ENCODE measurements at regions of chr5 and their contacts with region 1.

Region 1: DNA sequence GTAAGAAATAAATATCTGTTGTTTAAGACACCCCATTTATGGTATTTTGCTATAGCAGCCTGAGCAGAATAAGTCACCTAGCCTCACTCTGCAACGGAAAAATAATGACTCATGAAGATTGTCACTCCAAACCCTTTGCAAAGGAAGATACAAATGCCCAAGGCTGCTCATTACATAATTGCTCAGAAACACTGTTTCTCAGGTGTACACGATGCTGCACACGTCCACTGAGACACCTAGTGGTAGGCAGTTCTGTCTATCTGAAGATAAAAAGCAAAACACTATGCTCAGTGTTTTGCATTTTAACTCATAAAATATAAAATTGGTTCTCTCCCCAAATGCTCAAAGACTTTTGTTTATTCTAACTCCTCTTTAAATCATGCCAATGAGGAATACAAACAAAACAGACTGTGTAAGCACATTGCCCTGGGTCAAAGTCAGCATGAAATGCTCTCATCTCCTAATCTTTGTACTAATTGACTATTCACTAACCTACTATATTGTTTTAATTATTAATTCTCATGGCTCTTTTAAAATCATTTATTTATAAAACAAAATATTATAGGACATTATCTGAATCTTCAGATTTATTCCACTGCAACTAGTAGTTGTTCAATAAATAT is 7.7 kb upstream of the TSLP start:
- DNase-seq: no peak
- H3K4me3 Mint-ChIP-seq: no peak overlapping the region
- H3K27ac Mint-ChIP-seq: no peak overlapping the region
- H3K4me1 Mint-ChIP-seq: peaks cover 5% of the 10 kb centered on the region
- H3K27me3 Mint-ChIP-seq: peaks cover 54% of the 10 kb centered on the region

Region 2: GRCh38 chr5:110757118-110757729 is 306.6 kb before region 1 on chr5:
- intact Hi-C with region 1: loop called (anchors 5 kb)
- DNase-seq: no peak
- H3K4me3 Mint-ChIP-seq: no peak overlapping the region
- H3K27ac Mint-ChIP-seq: no peak overlapping the region
- H3K4me1 Mint-ChIP-seq: peaks cover 28% of the 10 kb centered on the region
- H3K27me3 Mint-ChIP-seq: no peaks in the 10 kb centered on the region

Region 3: DNA sequence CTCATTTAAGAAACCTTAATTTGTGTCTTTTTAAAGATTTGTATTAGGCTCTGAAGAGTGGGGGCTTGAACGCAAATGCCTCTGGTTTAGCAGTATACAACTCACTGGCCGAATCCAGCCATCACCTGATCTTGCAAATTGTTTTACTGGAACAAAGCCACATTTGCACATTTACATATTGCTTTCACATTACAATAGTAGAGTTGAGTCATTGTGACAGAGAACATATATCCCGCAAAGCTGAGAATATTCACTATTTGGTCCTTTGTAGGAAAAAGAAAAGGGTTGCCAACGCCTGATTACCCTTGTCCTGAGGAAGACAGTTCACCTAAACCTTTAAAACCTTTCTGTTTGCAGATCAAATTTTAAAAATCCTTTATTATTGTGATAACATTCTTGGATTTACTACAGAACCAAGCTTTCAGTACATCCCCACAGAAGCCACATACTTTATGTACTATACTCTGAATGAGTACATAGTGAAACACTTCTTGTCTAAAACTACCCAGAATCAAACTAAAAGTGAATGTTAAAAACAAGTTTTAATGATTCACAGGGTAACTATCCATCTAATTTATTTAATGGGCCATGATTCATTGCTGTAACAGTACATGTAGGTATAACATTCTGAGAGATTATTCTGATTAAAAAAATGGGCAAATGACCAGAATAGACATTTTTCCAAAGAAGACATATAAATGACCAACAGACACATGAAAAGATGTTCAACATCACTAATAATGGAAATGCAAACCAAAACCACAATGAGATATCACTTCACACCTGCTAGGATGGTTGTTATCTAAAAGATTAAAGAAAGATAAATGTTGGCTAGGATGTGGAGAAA is 164.0 kb before region 1 on chr5:
- intact Hi-C with region 1: loop called (anchors 10 kb)
- DNase-seq: no peak
- H3K4me3 Mint-ChIP-seq: no peak overlapping the region
- H3K27ac Mint-ChIP-seq: no peak overlapping the region
- H3K4me1 Mint-ChIP-seq: peaks cover 10% of the 10 kb centered on the region
- H3K27me3 Mint-ChIP-seq: peaks cover 9% of the 10 kb centered on the region

Measured in activated T-helper 2 cell treated with anti-CD3 and anti-CD28 coated beads, Interferon-gamma antibody, Interleukin-2, Interleukin-4, amounts not matched to agents 10 μg/mL and 5 μg/mL and 100 μg/mL, durations not matched to agents 14 hours and 24 hours and 36 hours (primary cell).